WTC11 (cell line): ENCODE measurements at regions of chr20 and their contacts with region 1.

Region 1: GRCh38 chr20:5126512-5127203 is at the start of gene CDS2:
- DNase-seq: peak; percentile 100
- ATAC-seq: peak; percentile 90
- H3K4me3 Mint-ChIP-seq: peak within 1 kb of the TSS; percentile 87
- H3K27ac Mint-ChIP-seq: peak within 1 kb of the TSS; percentile 93
- H3K4me1 Mint-ChIP-seq: peaks cover 23% of the 10 kb centered on the region
- H3K27me3 Mint-ChIP-seq: no peaks in the 10 kb centered on the region
- CTCF ChIP-seq: no peak
- total RNA-seq, gene CDS2: 49.1 to 56.6 TPM (median 54.9 TPM) in 3 replicates

Region 2: GRCh38 chr20:5146871-5147592 is 20.4 kb after region 1 on chr20:
- CTCF ChIA-PET with region 1: interaction called, 13 read pairs
- POLR2A ChIA-PET with region 1: no interaction called
- DNase-seq: no peak
- ATAC-seq: no peak
- H3K4me3 Mint-ChIP-seq: no peak overlapping the region
- H3K27ac Mint-ChIP-seq: no peak overlapping the region
- H3K4me1 Mint-ChIP-seq: peaks cover 11% of the 10 kb centered on the region
- H3K27me3 Mint-ChIP-seq: no peaks in the 10 kb centered on the region
- CTCF ChIP-seq: no peak

Region 3: GRCh38 chr20:5168651-5169396 is 42.2 kb after region 1 on chr20:
- CTCF ChIA-PET with region 1: interaction called, 48 read pairs
- POLR2A ChIA-PET with region 1: interaction called, 9 read pairs
- DNase-seq: peak; percentile 41
- ATAC-seq: peak; percentile 80
- H3K4me3 Mint-ChIP-seq: no peak overlapping the region
- H3K27ac Mint-ChIP-seq: peak overlapping the region; percentile 93
- H3K4me1 Mint-ChIP-seq: peaks cover 55% of the 10 kb centered on the region
- H3K27me3 Mint-ChIP-seq: no peaks in the 10 kb centered on the region
- CTCF ChIP-seq: no peak

Region 4: DNA sequence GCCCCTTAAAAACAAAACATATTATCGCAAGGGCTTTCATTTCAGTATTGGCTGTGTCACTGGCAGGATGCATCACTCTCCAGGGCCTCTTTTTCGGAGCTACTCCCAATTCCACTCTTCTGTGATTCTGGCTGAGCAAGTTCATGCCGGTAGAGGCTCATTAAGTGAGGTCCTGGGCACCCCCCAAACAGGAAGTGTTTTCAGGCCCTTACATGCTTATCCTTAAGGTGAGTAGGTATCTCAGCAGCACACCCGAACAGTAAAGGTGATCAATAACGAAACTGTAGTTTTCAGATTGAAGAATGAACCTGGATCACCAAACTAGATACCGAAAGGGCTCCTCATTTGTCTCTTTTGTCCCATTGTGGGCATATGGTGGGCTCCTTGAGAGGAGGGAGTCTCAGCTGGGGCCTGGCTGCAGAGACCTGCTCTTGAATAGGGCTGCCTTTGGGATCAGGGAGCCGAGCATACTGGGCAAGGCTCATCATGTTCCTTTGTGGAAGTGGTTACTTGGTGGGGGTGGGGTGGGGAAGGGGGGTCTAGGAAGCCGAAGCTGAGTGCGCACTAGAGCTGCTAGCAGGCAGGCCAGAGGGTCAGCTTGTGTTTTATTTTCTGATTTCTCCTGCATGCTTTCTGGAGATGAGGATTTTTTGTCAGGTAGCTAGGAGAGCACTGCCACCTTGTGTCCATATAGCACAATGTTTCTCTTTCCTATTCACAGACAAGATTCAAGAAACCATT is 65.3 kb after region 1 on chr20:
- CTCF ChIA-PET with region 1: interaction called, 265 read pairs
- POLR2A ChIA-PET with region 1: interaction called, 23 read pairs
- DNase-seq: peak; percentile 16
- ATAC-seq: peak; percentile 73
- H3K4me3 Mint-ChIP-seq: no peak overlapping the region
- H3K27ac Mint-ChIP-seq: peak overlapping the region; percentile 71
- H3K4me1 Mint-ChIP-seq: peaks cover 22% of the 10 kb centered on the region
- H3K27me3 Mint-ChIP-seq: no peaks in the 10 kb centered on the region
- CTCF ChIP-seq: peak; percentile 50; the same call in 1 of the 2 replicates

Region 5: DNA sequence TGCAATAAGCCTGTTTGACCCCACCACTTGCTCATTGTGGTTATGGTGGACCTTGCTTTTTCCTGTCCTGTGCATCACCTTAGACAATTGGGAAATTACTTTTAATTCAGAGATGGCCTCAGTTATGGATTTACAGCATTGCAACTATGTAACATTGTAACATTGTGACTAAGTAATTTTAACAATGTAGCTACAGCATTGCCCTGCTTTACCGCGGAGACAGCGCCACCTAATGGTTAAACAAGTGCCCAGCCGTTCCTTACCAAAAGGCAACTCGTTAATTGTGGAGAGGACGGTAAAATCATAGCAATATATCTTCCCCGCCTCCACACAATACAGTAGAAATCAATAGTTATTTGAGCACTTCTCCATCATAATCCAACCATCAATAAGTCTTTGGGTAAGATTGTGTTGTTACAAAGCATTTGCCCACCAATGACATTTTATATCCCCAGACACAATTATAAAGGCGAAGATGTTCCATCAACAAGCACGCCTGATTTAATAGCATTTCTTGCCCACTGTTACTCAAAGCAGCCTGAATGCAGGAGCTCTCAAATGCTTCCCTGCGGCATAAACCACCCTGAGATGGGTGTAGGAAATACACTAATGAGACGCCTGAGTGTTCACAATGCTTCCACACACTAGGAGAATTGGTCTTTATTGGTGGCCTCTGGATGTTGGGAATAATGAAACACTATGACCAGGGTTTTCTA is 96.4 kb after region 1 on chr20:
- CTCF ChIA-PET with region 1: interaction called, 36 read pairs
- POLR2A ChIA-PET with region 1: no interaction called
- DNase-seq: peak; percentile 69
- ATAC-seq: peak; percentile 80
- H3K4me3 Mint-ChIP-seq: no peak overlapping the region
- H3K27ac Mint-ChIP-seq: no peak overlapping the region
- H3K4me1 Mint-ChIP-seq: peaks cover 3% of the 10 kb centered on the region; the same call in 1 of the 2 replicates
- H3K27me3 Mint-ChIP-seq: no peaks in the 10 kb centered on the region; the same call in 1 of the 2 replicates
- CTCF ChIP-seq: peak; percentile 73

Region 6: GRCh38 chr20:5504061-5504739 is 377.5 kb after region 1 on chr20:
- CTCF ChIA-PET with region 1: no interaction called
- POLR2A ChIA-PET with region 1: no interaction called
- DNase-seq: peak; percentile 30
- ATAC-seq: peak; percentile 65
- H3K4me3 Mint-ChIP-seq: peak overlapping the region; percentile 62
- H3K27ac Mint-ChIP-seq: no peak overlapping the region
- H3K4me1 Mint-ChIP-seq: no peaks in the 10 kb centered on the region
- H3K27me3 Mint-ChIP-seq: no peaks in the 10 kb centered on the region
- CTCF ChIP-seq: no peak